Breast epithelium (tissue), 4 donors: ENCODE measurements at regions of chr2 and their contacts with region 1.

Region 1: GRCh38 chr2:119289093-119289492 is 65.5 kb downstream of the STEAP3 start:
- DNase-seq: peak in 1 of 2 donors; percentile 56
- H3K4me3 ChIP-seq: no peak overlapping the region
- H3K27ac ChIP-seq: peak overlapping the region; percentile 70 to 78
- H3K4me1 ChIP-seq: no peaks in the 10 kb centered on the region
- H3K27me3 ChIP-seq: no peaks in the 10 kb centered on the region
- CTCF ChIP-seq: no peak
- POLR2A ChIP-seq: no peak

Region 2: DNA sequence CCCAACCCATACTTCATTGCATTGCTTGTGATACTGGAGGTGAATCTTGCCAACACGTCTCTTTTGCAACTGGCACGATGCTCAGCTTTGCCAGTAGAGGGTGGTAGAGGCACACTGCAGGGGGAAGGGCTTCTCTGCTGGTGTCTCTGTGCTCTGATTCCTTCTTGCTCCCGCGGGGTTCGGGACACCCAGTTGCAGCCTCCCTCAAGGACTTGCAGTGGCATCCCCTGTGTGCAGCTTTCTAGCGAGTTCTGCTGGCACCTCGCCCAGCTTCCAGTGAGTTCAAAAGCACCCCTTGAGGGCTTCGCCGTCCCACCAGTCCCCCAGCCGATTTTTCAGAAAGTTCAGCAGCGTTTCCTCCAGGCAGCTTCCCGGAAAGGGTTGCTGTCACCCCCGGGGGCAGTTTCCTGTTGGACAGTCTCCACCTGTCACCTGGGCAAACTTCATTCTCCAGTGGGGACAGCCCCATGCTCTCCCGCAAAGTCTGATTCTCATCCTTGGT is 406.3 kb before region 1 on chr2:
- intact Hi-C with region 1: loop called (anchors 5 kb)
- DNase-seq: peak; percentile 44 to 60
- H3K4me3 ChIP-seq: peak overlapping the region in 2 of 3 donors; percentile 22 to 27
- H3K27ac ChIP-seq: no peak overlapping the region
- H3K4me1 ChIP-seq: no peaks in the 10 kb centered on the region
- H3K27me3 ChIP-seq: peaks cover 0 to 4% of the 10 kb centered on the region in 2 donors
- CTCF ChIP-seq: peak; percentile 37 to 73 (median 65)
- POLR2A ChIP-seq: no peak